Common myeloid progenitor, CD34-positive (primary cell): ENCODE measurements at regions of chr2 and their contacts with region 1.

Region 1: GRCh38 chr2:16462958-16463357 is 202.7 kb downstream of the CYRIA start:
- DNase-seq: no peak
- H3K4me3 ChIP-seq: no peak overlapping the region
- H3K27ac ChIP-seq: no peak overlapping the region
- H3K4me1 ChIP-seq: peaks cover 0 to 38% (median 16%) of the 10 kb centered on the region in 4 experiments
- H3K27me3 ChIP-seq: no peaks in the 10 kb centered on the region

Region 2: DNA sequence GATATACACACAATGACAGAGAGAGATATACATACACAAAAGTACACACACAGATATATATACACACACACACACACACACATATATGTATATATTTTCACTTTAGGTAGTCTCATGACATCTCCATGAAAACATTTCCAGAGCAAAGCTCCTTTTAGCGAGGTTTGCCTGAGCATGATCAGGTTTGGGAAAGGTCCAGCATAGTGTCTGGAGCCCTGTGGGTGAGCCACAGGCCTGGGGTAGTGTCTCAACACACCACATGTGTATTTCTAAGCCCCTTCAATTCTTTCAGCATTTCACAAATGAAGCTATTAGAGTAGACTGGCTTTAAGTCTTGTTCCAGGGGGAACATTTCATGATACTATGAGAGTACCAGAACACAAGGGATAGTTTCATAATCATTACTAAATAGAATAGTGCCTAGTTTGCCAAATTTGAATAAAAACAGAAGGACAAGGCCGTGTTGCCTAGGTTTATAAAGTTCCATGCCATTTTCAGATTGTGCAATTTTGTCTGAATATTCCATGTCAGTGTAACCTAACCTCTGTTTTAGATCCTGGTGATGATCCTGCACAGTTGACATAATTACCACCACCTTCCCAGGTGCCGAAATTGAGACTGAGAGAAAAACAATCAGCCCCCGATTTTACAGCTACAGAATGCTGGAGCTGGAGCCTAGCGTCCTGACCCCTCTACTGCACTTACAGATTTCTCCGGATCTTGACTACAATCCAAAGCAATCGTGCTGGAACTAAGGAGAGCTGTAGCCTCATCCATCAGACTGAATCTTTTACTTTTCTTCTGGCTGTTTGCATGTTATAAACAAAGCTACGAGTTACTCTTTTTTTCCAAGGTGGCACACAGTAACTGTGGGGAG is 130.0 kb before region 1 on chr2:
- CTCF ChIA-PET with region 1: no interaction called
- POLR2A ChIA-PET with region 1: no interaction called
- DNase-seq: no peak
- H3K4me3 ChIP-seq: no peak overlapping the region
- H3K27ac ChIP-seq: no peak overlapping the region
- H3K4me1 ChIP-seq: peaks cover 4 to 93% (median 64%) of the 10 kb centered on the region in 4 experiments
- H3K27me3 ChIP-seq: no peaks in the 10 kb centered on the region

Region 3: DNA sequence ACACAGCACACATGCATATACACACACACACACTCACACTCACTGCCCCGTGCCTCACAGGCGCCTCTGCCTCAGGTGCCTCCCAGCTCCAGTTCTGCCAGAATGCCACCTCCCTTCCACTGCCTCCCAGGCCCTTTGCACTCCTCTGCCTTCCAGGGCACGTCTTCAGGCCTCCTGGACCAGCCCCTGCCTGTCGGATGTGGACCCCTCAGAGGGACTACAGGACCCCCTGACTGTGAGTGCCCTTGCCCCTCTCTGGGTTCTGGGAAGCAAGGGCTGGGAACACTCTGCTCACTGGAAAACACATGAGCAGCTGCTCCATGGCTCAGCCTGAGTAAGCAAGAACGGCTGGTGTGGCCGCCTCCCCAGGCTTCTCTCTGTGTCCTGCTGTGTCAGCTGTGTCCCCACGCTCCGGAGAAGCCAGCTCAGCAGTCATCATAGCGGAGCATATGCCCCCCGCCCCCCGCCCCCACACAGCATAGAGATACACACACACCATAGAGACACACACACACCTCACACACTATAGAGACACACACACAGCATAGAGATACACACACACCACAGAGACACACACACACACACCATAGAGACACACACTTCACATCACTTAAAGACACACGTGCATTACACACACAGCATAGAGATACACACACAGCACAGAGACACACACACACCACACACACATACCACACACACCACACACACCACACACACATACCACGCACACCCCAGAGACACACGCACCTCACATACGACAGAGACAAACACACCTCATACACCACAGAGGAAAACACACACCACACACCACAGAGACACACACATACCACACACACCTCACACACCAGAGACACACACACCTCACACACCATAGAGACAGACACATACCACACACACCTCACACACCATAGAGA is 68.6 kb before region 1 on chr2:
- CTCF ChIA-PET with region 1: no interaction called
- POLR2A ChIA-PET with region 1: no interaction called
- DNase-seq: peak in 2 of 3 donors; percentile 46 to 61
- H3K4me3 ChIP-seq: no peak overlapping the region
- H3K27ac ChIP-seq: no peak overlapping the region
- H3K4me1 ChIP-seq: peaks cover 3 to 36% (median 17%) of the 10 kb centered on the region in 4 experiments
- H3K27me3 ChIP-seq: no peaks in the 10 kb centered on the region

Region 4: GRCh38 chr2:16452117-16452516 is 10.8 kb before region 1 on chr2:
- CTCF ChIA-PET with region 1: interaction called, 15 read pairs
- POLR2A ChIA-PET with region 1: no interaction called
- DNase-seq: no peak
- H3K4me3 ChIP-seq: peak overlapping the region in 1 of 7 experiments; percentile 4
- H3K27ac ChIP-seq: no peak overlapping the region
- H3K4me1 ChIP-seq: peaks cover 0 to 4% (median under 1%) of the 10 kb centered on the region in 4 experiments
- H3K27me3 ChIP-seq: no peaks in the 10 kb centered on the region

Region 5: DNA sequence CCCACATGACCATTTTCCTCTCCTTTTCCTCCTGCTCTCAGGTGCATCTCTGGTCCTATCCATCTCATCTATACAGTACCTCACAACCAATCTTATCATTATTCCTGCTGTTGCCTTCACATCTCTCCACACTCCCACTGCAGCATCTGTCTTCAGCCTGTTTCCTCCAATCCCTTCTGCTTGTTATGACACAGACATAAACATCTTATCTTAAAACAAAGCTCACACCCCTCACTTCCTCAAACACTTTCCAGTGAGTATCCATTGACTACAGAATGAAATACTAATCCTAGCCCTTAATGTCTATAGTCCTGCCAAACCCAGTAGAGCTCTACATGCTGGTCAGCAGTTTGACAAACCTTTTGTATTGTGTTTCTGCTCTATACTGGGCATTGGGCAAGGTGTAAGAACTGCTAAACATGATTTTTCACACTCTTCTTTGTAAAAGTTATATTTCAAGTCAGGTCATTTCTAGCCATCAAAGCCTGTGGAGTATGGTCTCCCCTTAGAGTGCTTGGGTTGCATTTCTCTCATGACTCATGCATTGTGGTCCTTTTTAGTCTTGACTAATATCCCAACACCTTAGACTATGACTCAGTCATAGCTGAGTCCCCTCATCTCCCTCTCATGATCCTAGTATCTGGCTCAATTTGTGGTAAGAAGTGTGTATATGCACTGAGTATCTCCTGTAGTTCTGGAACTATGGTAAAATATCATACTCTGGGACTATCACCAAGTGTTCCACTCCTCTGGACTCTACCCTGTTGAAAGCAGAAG is 15.7 kb after region 1 on chr2:
- CTCF ChIA-PET with region 1: interaction called, 14 read pairs
- POLR2A ChIA-PET with region 1: interaction called, 3 read pairs
- DNase-seq: peak; percentile 68 to 93 (median 89)
- H3K4me3 ChIP-seq: peak overlapping the region in 6 of 7 experiments; percentile 20 to 76 (median 62)
- H3K27ac ChIP-seq: peak overlapping the region; percentile 77 to 84
- H3K4me1 ChIP-seq: peaks cover 45 to 92% (median 78%) of the 10 kb centered on the region in 4 experiments
- H3K27me3 ChIP-seq: no peaks in the 10 kb centered on the region

Region 6: DNA sequence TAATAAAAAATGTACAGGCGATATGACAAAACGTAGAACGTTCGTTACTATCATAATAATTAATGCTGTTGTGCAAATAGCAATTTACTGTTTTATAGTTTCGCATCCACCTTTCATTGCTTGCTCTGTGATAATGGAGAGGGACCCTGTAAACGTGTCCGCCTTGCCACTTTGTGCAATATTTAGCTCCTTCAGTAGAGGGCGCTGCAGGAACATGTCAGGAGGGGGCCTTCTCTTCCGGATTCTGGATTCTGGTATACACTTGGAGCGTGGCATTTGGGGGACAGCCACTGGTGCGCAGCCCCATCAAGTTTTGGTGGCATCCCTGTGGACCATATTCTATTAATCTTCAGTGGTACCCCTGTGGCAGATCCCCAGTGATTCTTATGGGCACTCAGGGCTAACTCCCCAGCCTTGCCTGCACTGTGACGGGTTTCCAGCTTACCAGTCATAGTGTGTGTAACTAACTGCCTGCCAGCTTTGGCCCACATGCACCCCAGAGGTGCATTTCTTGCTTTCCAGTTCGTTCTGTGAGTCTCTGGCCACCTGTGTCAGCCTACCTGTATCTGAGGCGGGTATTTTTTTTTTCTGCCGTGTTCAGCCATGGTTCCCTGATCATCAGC is 62.4 kb after region 1 on chr2:
- CTCF ChIA-PET with region 1: no interaction called
- POLR2A ChIA-PET with region 1: no interaction called
- DNase-seq: peak; percentile 10 to 27 (median 19)
- H3K4me3 ChIP-seq: no peak overlapping the region
- H3K27ac ChIP-seq: no peak overlapping the region
- H3K4me1 ChIP-seq: no peaks in the 10 kb centered on the region
- H3K27me3 ChIP-seq: no peaks in the 10 kb centered on the region